Activated CD4-positive, alpha-beta memory T cell treated with anti-CD3 and anti-CD28 coated beads for 36 hours (primary cell): ENCODE measurements at regions of chr4 and their contacts with region 1.

Region 1: GRCh38 chr4:112199040-112199439 is 32.5 kb upstream of the AP1AR start:
- DNase-seq: no peak
- H3K4me3 Mint-ChIP-seq: no peak overlapping the region
- H3K27ac Mint-ChIP-seq: no peak overlapping the region
- H3K4me1 Mint-ChIP-seq: peaks cover 19% of the 10 kb centered on the region
- H3K27me3 Mint-ChIP-seq: peaks cover 4% of the 10 kb centered on the region

Region 2: GRCh38 chr4:112119353-112119783 is 79.7 kb before region 1 on chr4:
- CTCF ChIA-PET with region 1: interaction called, 6 read pairs
- POLR2A ChIA-PET with region 1: no interaction called
- intact Hi-C with region 1: loop called (anchors 1 kb)
- DNase-seq: peak; percentile 35
- H3K4me3 Mint-ChIP-seq: no peak overlapping the region
- H3K27ac Mint-ChIP-seq: peak overlapping the region; percentile 81
- H3K4me1 Mint-ChIP-seq: peaks cover 12% of the 10 kb centered on the region
- H3K27me3 Mint-ChIP-seq: peaks cover 2% of the 10 kb centered on the region

Region 3: GRCh38 chr4:112145326-112145819 is 53.7 kb before region 1 on chr4 and contains the start of gene FAM241A:
- CTCF ChIA-PET with region 1: interaction called, 4 read pairs
- POLR2A ChIA-PET with region 1: no interaction called
- intact Hi-C with region 1: loop called (anchors 1 kb)
- DNase-seq: peak; percentile 92
- H3K4me3 Mint-ChIP-seq: peak within 1 kb of the TSS; percentile 87
- H3K27ac Mint-ChIP-seq: peak within 1 kb of the TSS; percentile 84
- H3K4me1 Mint-ChIP-seq: peaks cover 42% of the 10 kb centered on the region
- H3K27me3 Mint-ChIP-seq: no peaks in the 10 kb centered on the region
- total RNA-seq, gene FAM241A: 3.1 to 3.5 TPM

Region 4: GRCh38 chr4:112231779-112232713 is 33.0 kb after region 1 on chr4 and contains the start of gene AP1AR:
- CTCF ChIA-PET with region 1: interaction called, 3 read pairs
- POLR2A ChIA-PET with region 1: no interaction called
- intact Hi-C with region 1: loop called (anchors 1 kb)
- DNase-seq: peak; percentile 87
- H3K4me3 Mint-ChIP-seq: peak within 1 kb of the TSS; percentile 87
- H3K27ac Mint-ChIP-seq: peak within 1 kb of the TSS; percentile 98
- H3K4me1 Mint-ChIP-seq: peaks cover 34% of the 10 kb centered on the region
- H3K27me3 Mint-ChIP-seq: no peaks in the 10 kb centered on the region
- total RNA-seq, gene AP1AR: 15.4 to 19.1 TPM

Region 5: GRCh38 chr4:112284662-112285411 is 85.8 kb after region 1 on chr4:
- CTCF ChIA-PET with region 1: no interaction called
- POLR2A ChIA-PET with region 1: no interaction called
- intact Hi-C with region 1: loop called (anchors 1 kb)
- DNase-seq: peak; percentile 39
- H3K4me3 Mint-ChIP-seq: peak overlapping the region; percentile 94
- H3K27ac Mint-ChIP-seq: peak overlapping the region; percentile 97
- H3K4me1 Mint-ChIP-seq: peaks cover 69% of the 10 kb centered on the region
- H3K27me3 Mint-ChIP-seq: no peaks in the 10 kb centered on the region

Region 6: DNA sequence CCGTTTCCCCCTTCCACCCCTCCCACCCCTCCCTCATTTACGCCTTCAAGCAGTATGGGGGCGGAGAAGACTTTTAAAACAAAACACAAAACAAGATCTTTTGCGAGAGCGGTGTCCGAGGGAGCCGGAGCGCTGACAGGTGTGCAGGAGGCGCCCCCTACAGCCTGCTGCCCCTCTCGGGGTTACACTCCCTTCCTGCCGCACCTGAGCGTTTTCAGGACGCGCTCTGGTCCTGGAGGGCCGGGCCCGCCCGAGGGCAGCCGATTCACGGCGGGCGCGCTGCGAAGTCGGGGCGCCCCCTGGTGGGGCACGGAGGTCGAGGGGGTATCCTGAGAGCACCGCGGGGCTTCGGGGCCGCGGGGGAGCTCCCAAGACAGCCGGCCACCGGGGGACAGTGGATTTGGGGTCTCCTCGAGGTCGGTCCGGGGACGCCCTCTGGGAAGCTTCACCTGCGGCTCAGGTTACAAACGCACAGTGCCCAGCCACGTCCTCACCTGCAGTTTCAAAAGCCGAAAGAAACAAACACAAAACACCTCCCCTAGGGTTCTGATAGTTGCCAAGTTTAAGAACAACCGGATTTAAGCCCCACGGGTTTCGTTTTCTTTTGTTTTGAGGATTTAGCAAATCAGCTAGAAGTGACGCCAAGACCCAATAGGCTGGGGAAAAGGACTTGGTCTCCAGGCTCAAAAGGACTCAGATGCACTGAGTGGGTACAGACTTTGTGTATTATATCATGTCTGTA is 324.9 kb after region 1 on chr4:
- CTCF ChIA-PET with region 1: interaction called, 3 read pairs
- POLR2A ChIA-PET with region 1: no interaction called
- intact Hi-C with region 1: loop called (anchors 1 kb)
- DNase-seq: peak; percentile 86
- H3K4me3 Mint-ChIP-seq: peak overlapping the region; percentile 72
- H3K27ac Mint-ChIP-seq: no peak overlapping the region
- H3K4me1 Mint-ChIP-seq: peaks cover 31% of the 10 kb centered on the region
- H3K27me3 Mint-ChIP-seq: peaks cover 51% of the 10 kb centered on the region